ENCODE measurements at regions of chr1 and their contacts with region 1.

Region 1: GRCh38 chr1:221263831-221264767 is 384.9 kb downstream of the HLX start:
- DNase-seq: no peak
- H3K4me3 ChIP-seq: no peak overlapping the region
- H3K27ac ChIP-seq: peak overlapping the region in 1 of 2 donors; percentile 66
- H3K4me1 ChIP-seq: no peaks in the 10 kb centered on the region
- H3K27me3 ChIP-seq: no peaks in the 10 kb centered on the region
- CTCF ChIP-seq: peak in 1 of 3 donors; percentile 47
- POLR2A ChIP-seq: no peak

Region 2: DNA sequence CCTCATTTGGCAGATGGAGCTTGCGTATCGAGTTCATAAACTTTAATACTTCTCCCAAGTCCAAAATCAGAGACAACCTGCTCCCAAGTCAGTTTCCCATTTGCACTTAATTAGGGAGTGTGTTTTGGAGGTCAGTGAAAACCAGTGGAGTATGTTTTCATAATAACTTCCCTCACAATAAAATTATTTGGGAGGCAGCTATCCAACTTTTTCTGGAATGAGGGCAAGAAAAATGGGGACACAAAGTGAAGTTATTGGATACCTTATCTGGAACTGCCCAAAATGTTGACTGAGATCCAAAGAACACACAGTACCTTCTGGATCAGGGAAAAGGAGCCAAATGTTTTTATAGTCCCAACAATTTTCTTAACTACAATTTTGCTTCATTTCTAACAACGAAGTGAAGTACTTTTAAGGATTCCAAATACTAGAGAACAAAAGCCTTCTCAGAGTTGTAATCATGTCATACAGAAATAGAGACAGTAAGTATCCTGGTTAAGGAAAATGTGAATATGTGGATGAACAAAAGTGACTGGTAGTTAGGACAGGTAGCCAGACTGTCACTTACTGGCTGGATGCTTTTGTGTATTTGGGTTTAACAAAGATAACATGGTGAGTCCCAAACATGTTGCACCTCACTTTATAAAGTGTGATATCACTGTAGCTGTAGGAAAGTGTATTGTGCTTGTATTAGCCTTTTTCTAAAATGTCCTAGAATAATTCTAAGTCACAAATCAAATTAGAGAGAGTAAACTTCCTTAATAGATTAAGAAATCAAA is 59.9 kb before region 1 on chr1:
- intact Hi-C with region 1: no loop called
- DNase-seq: no peak
- H3K4me3 ChIP-seq: no peak overlapping the region
- H3K27ac ChIP-seq: peak overlapping the region; percentile 29 to 46
- H3K4me1 ChIP-seq: no peaks in the 10 kb centered on the region
- H3K27me3 ChIP-seq: no peaks in the 10 kb centered on the region
- CTCF ChIP-seq: no peak
- POLR2A ChIP-seq: no peak

Region 3: GRCh38 chr1:221284028-221284427 is 19.9 kb after region 1 on chr1:
- intact Hi-C with region 1: no loop called
- DNase-seq: no peak
- H3K4me3 ChIP-seq: no peak overlapping the region
- H3K27ac ChIP-seq: no peak overlapping the region
- H3K4me1 ChIP-seq: no peaks in the 10 kb centered on the region
- H3K27me3 ChIP-seq: no peaks in the 10 kb centered on the region
- CTCF ChIP-seq: no peak
- POLR2A ChIP-seq: no peak

Region 4: GRCh38 chr1:221858818-221859611 is 594.9 kb after region 1 on chr1:
- intact Hi-C with region 1: loop called (anchors 10 kb)
- DNase-seq: no peak
- H3K4me3 ChIP-seq: no peak overlapping the region
- H3K27ac ChIP-seq: no peak overlapping the region
- H3K4me1 ChIP-seq: no peaks in the 10 kb centered on the region
- H3K27me3 ChIP-seq: no peaks in the 10 kb centered on the region
- CTCF ChIP-seq: no peak
- POLR2A ChIP-seq: no peak

Measured in breast epithelium (tissue), 4 donors.